Activated CD4-positive, alpha-beta T cell treated with anti-CD3 and anti-CD28 coated beads for 36 hours (primary cell): ENCODE measurements at regions of chr10 and their contacts with region 1.

Region 1: DNA sequence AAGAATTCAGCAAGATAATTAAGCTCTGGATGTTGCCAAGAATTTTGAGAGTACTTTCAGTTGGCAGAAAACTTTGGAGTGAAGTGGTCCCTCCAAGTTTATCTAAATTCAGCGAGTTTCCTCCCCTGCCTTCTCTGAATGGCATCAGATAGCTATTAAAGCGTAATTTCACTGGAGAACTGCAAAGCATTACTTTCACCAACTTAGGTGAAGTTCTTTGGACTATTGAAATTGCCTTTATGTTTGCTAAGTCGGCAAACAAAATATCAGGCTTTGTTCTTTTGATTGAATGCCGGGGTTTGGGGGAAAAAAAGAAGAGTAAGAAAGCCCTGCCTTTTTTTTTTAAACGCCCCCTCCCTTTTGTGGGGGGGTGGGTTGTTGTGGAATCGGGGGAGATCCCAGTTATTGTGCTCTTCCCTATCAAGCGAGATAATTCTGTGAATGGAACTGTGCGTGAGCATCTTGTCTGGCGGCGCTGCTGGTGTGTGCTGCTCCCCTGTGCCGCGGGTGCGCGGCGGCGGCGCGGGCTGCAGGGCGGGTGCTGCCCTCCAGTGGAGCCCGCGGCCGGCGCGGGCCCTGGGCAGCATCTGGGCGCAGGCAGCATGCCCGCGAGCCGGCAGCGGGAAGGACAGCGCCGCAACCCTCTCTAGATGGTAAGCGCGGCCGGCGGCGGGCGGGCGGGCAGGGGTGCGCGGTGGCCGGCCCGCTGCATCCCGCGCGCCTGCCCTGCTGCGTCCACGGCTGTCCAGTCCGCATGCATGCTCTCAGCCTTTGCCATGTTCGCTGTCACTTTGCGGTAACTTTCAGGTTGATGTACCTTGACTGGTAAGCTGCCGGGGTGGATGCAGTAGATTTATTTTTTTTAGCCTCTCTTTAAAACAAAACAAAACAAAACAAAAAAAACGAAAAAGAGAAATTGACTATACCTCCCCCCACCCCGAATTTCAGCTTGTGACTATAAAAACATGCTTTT is 176.5 kb downstream of the TCF7L2 start:
- DNase-seq: peak; percentile 76
- ATAC-seq: peak; percentile 90
- H3K4me3 Mint-ChIP-seq: peak overlapping the region; percentile 28
- H3K27ac Mint-ChIP-seq: no peak overlapping the region
- H3K4me1 Mint-ChIP-seq: peaks cover 6% of the 10 kb centered on the region
- H3K27me3 Mint-ChIP-seq: peaks cover 44% of the 10 kb centered on the region

Region 2: GRCh38 chr10:112565434-112566053 is 561.0 kb before region 1 on chr10:
- CTCF ChIA-PET with region 1: no interaction called
- POLR2A ChIA-PET with region 1: no interaction called
- intact Hi-C with region 1: loop called in 1 of 2 experiments (anchors 5 kb)
- DNase-seq: peak; percentile 22
- ATAC-seq: peak; percentile 49
- H3K4me3 Mint-ChIP-seq: no peak overlapping the region
- H3K27ac Mint-ChIP-seq: no peak overlapping the region
- H3K4me1 Mint-ChIP-seq: no peaks in the 10 kb centered on the region
- H3K27me3 Mint-ChIP-seq: no peaks in the 10 kb centered on the region

Region 3: GRCh38 chr10:112721080-112721698 is 405.3 kb before region 1 on chr10:
- CTCF ChIA-PET with region 1: interaction called, 4 read pairs
- POLR2A ChIA-PET with region 1: no interaction called
- intact Hi-C with region 1: loop called (anchors 1 to 10 kb)
- DNase-seq: no peak
- ATAC-seq: peak; percentile 51
- H3K4me3 Mint-ChIP-seq: no peak overlapping the region
- H3K27ac Mint-ChIP-seq: no peak overlapping the region
- H3K4me1 Mint-ChIP-seq: no peaks in the 10 kb centered on the region
- H3K27me3 Mint-ChIP-seq: no peaks in the 10 kb centered on the region

Region 4: DNA sequence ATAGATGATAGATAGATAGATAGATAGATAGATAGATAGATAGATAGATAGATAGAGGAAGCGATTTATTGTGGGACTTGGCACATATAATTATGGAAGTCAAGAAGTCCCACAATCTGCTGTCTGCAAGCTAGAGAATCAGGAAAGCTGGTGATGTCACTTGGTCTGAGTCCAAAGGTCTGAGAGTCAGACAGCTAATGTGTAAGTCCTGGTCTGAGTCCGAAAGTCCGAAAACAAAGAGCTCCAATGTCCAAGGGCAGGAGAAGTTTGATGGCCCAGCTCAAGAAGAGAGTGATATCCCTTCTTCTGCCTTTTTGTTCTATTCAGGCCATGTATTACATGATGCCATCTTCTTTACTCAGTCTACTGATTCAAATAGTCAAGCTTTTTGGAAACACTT is 230.2 kb before region 1 on chr10:
- CTCF ChIA-PET with region 1: no interaction called
- POLR2A ChIA-PET with region 1: no interaction called
- intact Hi-C with region 1: no loop called
- DNase-seq: no peak
- ATAC-seq: no peak
- H3K4me3 Mint-ChIP-seq: no peak overlapping the region
- H3K27ac Mint-ChIP-seq: no peak overlapping the region
- H3K4me1 Mint-ChIP-seq: no peaks in the 10 kb centered on the region
- H3K27me3 Mint-ChIP-seq: no peaks in the 10 kb centered on the region

Region 5: DNA sequence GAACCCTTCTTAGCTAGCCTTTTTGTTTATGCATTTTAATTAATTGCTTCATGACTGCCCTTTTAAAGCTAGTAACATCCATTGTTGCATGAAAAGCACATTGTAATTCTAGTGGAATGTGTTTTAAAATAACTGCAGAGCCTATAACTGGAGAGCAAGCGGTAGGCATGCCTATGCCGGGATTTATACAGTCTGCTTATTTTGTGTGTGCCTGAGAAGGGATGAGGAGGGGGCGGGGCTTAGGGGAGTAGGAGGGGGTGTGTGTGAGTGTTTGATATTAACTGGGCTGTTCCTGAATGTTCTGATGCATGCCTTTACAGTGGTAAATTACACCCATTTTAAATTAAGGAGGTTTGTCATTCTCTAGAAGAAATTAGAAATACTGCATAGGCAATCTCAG is 31.7 kb after region 1 on chr10:
- CTCF ChIA-PET with region 1: no interaction called
- POLR2A ChIA-PET with region 1: no interaction called
- intact Hi-C with region 1: no loop called
- DNase-seq: no peak
- ATAC-seq: no peak
- H3K4me3 Mint-ChIP-seq: no peak overlapping the region
- H3K27ac Mint-ChIP-seq: no peak overlapping the region
- H3K4me1 Mint-ChIP-seq: no peaks in the 10 kb centered on the region
- H3K27me3 Mint-ChIP-seq: no peaks in the 10 kb centered on the region